ENCODE measurements at regions of chr1 and their contacts with region 1.

Region 1: GRCh38 chr1:43946236-43947060 is at the start of gene IPO13:
- DNase-seq: peak; percentile 96
- H3K4me3 ChIP-seq: peak within 1 kb of the TSS; percentile 64 to 76 (median 67)
- H3K27ac ChIP-seq: peak within 1 kb of the TSS; percentile 94
- H3K4me1 ChIP-seq: peaks cover 20% of the 10 kb centered on the region
- H3K27me3 ChIP-seq: no peaks in the 10 kb centered on the region
- CTCF ChIP-seq: peak; percentile 65 to 70
- POLR2A ChIP-seq: peak; percentile 86
- total RNA-seq, gene IPO13: 25.8 and 29.3 TPM in 2 replicates

Region 2: DNA sequence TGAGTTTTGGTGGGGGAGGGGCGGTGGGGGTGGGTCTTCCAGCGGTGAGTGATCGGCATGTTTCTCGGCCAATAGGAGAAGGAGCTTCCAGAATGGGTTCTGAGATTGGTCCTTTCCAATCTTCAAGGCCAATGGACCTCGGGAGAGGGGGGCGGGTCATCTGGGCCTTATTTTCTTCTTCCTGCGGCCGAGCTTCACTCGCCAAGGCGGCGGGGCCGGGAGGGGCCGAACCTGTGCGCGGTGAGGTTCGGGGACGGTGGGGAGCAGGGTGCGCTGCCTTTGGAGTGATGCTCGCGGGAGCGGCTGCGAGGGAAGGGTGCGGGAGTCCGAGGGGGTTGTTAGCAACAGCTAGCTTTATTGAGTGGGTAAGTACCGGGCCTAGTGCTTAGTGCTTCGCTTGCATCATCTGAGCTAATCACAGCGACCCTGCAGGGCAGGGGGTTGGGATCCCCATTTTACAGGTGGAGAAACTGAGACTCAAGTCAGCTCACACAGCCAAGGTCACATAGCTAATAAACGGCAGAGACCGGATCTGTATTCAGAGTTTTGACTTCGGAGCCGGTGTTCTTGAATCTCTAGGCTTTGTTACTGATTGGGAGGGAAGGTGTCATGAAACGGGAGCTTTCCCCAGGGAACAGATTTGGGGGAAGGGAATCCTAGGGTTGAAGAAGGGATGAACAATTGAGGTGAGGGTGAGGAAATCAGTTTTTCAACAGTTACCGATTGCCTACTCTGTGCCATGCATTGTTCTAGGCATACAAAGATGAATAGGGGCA is 295.9 kb before region 1 on chr1:
- CTCF ChIA-PET with region 1: no interaction called
- POLR2A ChIA-PET with region 1: no interaction called
- dilution Hi-C with region 1: no loop called
- intact Hi-C with region 1: loop called (anchors 1 kb)
- DNase-seq: peak; percentile 94
- H3K4me3 ChIP-seq: peak overlapping the region; percentile 60 to 95 (median 65)
- H3K27ac ChIP-seq: peak overlapping the region; percentile 63
- H3K4me1 ChIP-seq: peaks cover 16% of the 10 kb centered on the region
- H3K27me3 ChIP-seq: peaks cover under 1 to 1% of the 10 kb centered on the region in 2 experiments
- CTCF ChIP-seq: no peak
- POLR2A ChIP-seq: peak; percentile 99

Region 3: DNA sequence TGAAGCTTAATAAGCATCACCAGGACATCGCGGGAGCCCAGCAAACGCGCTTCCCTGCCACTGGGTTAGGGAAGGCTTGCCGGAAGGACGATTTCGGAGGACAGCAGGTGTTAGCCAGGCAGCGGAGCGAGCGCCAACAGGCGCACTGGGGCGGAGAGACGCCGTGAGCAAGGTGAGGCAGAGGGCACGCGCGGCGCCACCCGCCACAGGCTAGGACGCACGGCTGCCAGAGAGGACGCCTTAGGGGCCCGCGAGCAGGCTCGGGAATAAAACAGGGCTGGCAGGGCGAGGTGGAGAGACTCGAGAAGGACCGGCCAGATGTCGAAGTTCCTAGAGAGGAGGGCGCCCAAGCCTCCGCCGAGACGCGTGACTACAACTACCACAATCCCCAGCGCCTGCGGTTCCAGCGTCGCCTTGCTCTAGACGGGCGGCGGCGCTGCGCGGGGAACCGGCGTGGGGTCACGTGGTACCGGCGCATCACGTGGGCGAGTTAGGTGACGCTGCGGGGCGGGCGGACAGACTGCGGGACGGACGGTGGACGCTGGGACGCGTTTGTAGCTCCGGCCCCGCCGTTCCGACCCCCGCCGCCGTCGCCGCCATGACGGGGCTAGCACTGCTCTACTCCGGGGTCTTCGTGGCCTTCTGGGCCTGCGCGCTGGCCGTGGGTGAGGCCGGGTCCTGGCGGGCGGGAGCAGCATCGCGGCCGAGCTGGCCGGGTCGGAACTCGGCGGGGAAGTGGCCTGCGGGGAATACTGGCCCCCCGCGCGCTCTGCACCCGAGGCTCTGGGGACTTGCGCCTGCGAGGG is 28.2 kb after region 1 on chr1 and contains the start of gene ATP6V0B:
- CTCF ChIA-PET with region 1: interaction called, 4 read pairs
- POLR2A ChIA-PET with region 1: no interaction called
- dilution Hi-C with region 1: no loop called
- intact Hi-C with region 1: loop called (anchors 1 kb)
- DNase-seq: peak; percentile 94
- H3K4me3 ChIP-seq: peak within 1 kb of the TSS; percentile 69 to 73 (median 71)
- H3K27ac ChIP-seq: peak within 1 kb of the TSS; percentile 48
- H3K4me1 ChIP-seq: peaks cover 29% of the 10 kb centered on the region
- H3K27me3 ChIP-seq: no peaks in the 10 kb centered on the region
- CTCF ChIP-seq: no peak
- POLR2A ChIP-seq: peak; percentile 91
- total RNA-seq, gene ATP6V0B: 105 and 110 TPM in 2 replicates